ENCODE measurements at regions of chr14 and their contacts with region 1.

Region 1: DNA sequence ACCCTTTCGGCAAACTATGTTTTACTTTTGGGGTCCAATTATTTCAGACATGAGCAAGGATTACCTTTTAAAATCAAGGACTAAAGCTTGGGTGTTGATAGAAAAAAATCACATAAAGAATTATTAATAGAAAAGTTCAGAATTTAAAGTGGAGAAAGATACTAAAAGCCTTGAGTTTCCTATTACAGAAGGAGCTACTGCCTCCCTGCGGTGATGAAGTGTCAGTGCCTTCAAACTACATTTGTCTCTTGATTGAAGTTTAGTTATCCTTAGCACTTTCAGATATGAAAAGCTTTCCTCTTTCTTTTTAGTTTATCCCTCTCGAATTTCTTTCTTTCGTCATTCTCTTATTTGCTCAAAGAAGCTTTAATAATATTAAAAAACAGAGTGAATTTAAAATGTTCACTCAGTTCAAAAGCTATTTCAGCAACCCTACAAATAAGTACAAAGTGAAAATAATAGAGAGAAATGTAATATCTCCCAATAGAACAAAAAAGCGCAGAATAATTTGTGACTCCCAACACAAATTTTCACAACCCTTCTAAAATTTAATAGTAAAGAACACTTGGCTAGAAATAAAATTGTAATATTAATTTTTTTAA is 87.6 kb downstream of the SEC23A start:
- DNase-seq: no peak
- H3K4me3 ChIP-seq: no peak overlapping the region
- H3K27ac ChIP-seq: no peak overlapping the region
- H3K27me3 ChIP-seq: no peaks in the 10 kb centered on the region
- CTCF ChIP-seq: peak; percentile 87

Region 2: GRCh38 chr14:37903343-37904191 is 1111.9 kb before region 1 on chr14:
- CTCF ChIA-PET with region 1: interaction called, 22 read pairs
- POLR2A ChIA-PET with region 1: no interaction called
- DNase-seq: peak; percentile 10
- H3K4me3 ChIP-seq: no peak overlapping the region
- H3K27ac ChIP-seq: no peak overlapping the region
- H3K27me3 ChIP-seq: peaks cover 2% of the 10 kb centered on the region
- CTCF ChIP-seq: peak; percentile 56

Region 3: DNA sequence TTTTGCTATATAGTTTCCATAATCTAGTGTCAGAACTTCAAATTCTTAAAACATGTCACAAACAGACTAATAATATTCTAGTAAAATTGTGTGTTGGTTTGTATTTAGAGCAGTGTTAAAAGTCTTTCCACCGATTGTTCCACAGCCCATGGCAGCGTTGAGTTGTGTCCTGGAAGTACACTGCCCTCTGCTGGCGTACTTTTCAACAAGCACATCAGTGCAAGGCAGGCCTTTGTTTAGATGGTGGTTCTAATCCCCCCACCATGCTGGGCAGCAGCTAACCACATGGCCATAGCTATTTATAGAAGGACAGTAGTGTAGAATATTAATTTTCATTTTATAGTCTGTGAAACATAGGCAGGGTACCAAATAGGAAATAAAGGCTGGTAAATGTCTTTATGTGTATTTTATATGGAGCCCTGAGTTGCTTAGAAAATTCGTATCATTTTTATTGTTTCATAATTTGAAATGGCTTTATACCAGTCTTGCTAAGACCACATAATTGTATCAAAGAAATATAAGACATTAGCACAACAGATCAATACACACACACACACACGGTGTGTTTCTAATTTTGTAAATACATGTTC is 147.8 kb before region 1 on chr14:
- CTCF ChIA-PET with region 1: interaction called, 47 read pairs
- POLR2A ChIA-PET with region 1: no interaction called
- DNase-seq: peak; percentile 55
- H3K4me3 ChIP-seq: no peak overlapping the region
- H3K27ac ChIP-seq: no peak overlapping the region
- H3K27me3 ChIP-seq: peaks cover 2% of the 10 kb centered on the region
- CTCF ChIP-seq: peak; percentile 86

Region 4: GRCh38 chr14:38999949-39000348 is 15.5 kb before region 1 on chr14:
- CTCF ChIA-PET with region 1: interaction called, 33 read pairs
- POLR2A ChIA-PET with region 1: no interaction called
- DNase-seq: no peak
- H3K4me3 ChIP-seq: no peak overlapping the region
- H3K27ac ChIP-seq: no peak overlapping the region
- H3K27me3 ChIP-seq: no peaks in the 10 kb centered on the region
- CTCF ChIP-seq: no peak

Region 5: GRCh38 chr14:39025810-39026627 is 10.6 kb after region 1 on chr14:
- CTCF ChIA-PET with region 1: interaction called, 19 read pairs
- POLR2A ChIA-PET with region 1: no interaction called
- DNase-seq: no peak
- H3K4me3 ChIP-seq: no peak overlapping the region
- H3K27ac ChIP-seq: no peak overlapping the region
- H3K27me3 ChIP-seq: no peaks in the 10 kb centered on the region
- CTCF ChIP-seq: no peak

Region 6: GRCh38 chr14:39060818-39061437 is 45.5 kb after region 1 on chr14:
- CTCF ChIA-PET with region 1: interaction called, 10 read pairs
- POLR2A ChIA-PET with region 1: no interaction called
- DNase-seq: no peak
- H3K4me3 ChIP-seq: no peak overlapping the region
- H3K27ac ChIP-seq: no peak overlapping the region
- H3K27me3 ChIP-seq: no peaks in the 10 kb centered on the region
- CTCF ChIP-seq: no peak

Region 7: DNA sequence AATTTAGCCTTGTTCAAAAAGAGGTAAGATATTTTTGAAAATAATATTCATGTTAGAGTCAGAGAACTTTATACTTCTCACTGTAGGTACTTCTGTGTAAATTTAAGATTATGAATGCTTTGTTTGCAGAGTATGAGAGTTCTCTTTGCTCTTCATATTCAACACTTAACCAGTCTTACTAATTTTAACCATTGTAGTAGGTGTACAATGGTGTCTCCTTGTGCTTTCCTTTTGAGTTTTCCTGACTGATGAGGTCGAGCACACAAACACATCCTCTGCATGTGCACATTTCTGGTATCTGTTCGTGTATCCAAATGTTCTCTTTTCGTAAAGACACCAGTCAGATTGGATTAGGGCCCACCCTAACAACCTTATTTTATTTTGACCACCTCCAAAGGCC is 264.1 kb after region 1 on chr14:
- CTCF ChIA-PET with region 1: no interaction called
- POLR2A ChIA-PET with region 1: no interaction called
- DNase-seq: no peak
- H3K4me3 ChIP-seq: no peak overlapping the region
- H3K27ac ChIP-seq: no peak overlapping the region
- H3K27me3 ChIP-seq: no peaks in the 10 kb centered on the region
- CTCF ChIP-seq: no peak